ENCODE measurements at regions of chr11 and their contacts with region 1.

Region 1: DNA sequence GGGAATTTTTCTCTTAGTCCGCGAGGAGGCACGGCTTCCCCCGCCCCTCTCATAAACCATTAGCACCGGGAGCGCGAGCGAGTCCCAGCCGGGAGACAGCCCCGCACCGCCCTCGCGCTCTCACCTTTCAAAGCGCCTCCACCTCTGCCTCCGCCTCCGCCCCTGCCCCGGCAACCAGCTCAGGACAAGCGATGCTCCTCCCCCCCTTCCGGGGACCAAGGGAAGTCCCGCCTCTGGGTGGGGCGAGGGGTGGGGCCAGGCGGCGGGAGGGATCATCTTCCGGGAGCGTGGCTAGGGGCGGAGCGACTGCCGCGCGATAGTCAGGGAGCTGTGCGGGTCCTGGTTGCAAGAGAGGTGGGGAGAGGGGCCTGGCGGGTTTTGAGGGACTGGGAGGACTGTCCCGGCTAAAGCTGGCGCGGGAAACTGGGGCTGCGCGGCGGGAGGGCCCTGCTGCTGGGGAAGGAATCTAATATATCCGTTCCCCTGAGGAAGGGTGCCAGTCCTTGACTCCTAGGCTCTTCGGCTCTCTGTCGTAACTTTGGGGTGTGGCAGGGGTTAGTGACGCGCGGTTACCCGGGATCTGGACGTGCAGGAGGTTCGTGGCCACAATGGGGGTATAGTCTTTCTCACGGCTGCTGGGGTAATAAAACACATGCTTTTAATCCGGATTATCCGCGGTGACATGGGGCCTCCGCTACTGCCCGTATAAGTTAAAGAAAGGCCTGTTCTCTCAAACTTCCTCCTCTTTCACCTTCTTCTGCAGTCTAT is at the starts of genes CCDC82 and JRKL:
- DNase-seq: peak; percentile 94
- ATAC-seq: peak; percentile 94
- H3K4me3 ChIP-seq: peak within 1 kb of the TSS; percentile 77 to 88
- H3K27ac ChIP-seq: peak within 1 kb of the TSS; percentile 54
- H3K4me1 ChIP-seq: peaks cover 3 to 17% of the 10 kb centered on the region in 2 experiments; a peak in 2 of 4 replicates
- H3K27me3 ChIP-seq: no peaks in the 10 kb centered on the region
- CTCF ChIP-seq: no peak
- POLR2A ChIP-seq: peak; percentile 81
- RAD21 ChIP-seq: no peak
- total RNA-seq, gene CCDC82: 11.2 TPM
- total RNA-seq, gene JRKL: 6.7 TPM

Region 2: DNA sequence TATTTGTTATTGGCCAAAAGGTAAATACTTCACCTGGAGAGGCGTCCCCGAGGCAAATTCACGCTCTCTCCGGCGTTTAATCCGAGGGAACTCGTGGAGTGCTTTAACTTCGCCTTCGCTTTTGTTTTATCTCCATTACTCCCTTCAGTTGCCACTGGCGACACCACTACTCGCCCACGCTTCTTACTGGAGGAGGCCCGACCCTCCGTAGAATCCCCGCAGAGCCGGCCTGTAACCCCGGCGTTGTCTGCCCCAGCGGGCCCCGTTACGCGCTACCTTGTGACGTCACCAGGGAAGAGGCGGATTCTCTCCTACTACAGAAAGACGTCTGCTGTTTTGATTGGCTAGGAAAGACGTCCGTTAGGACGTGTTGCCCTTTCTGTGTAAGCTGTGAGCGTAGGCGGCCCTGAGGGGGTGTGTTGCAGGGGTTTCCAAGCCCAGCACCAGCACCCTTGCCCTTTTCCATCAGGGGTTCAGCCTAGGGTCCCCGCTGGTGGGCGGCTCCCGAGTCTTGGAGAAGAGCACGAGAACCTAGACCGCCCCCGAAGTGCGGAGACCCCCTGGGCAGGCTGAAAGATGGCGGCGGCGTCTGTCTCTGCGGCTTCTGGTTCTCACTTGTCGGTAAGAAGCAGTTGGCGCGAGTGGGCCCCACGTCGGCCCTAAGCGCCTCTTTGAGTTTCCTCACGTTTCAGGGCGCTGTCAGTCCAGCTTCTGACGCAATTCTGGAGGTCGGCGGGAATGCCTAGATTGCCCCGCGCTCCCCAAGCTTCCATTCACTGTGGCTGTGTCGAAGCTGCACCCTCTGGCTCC is 599.6 kb before region 1 on chr11 and contains the start of gene CEP57:
- CTCF ChIA-PET with region 1: no interaction called
- POLR2A ChIA-PET with region 1: no interaction called
- RAD21 ChIA-PET with region 1: no interaction called
- intact Hi-C with region 1: loop called (anchors 5 kb)
- DNase-seq: peak; percentile 97
- ATAC-seq: peak; percentile 78
- H3K4me3 ChIP-seq: peak within 1 kb of the TSS; percentile 76 to 87
- H3K27ac ChIP-seq: peak within 1 kb of the TSS; percentile 77
- H3K4me1 ChIP-seq: peaks cover 9 to 18% of the 10 kb centered on the region in 2 experiments; a peak in 3 of 4 replicates
- H3K27me3 ChIP-seq: no peaks in the 10 kb centered on the region
- CTCF ChIP-seq: no peak
- POLR2A ChIP-seq: peak; percentile 73
- RAD21 ChIP-seq: no peak
- total RNA-seq, gene CEP57: 43.3 TPM

Region 3: DNA sequence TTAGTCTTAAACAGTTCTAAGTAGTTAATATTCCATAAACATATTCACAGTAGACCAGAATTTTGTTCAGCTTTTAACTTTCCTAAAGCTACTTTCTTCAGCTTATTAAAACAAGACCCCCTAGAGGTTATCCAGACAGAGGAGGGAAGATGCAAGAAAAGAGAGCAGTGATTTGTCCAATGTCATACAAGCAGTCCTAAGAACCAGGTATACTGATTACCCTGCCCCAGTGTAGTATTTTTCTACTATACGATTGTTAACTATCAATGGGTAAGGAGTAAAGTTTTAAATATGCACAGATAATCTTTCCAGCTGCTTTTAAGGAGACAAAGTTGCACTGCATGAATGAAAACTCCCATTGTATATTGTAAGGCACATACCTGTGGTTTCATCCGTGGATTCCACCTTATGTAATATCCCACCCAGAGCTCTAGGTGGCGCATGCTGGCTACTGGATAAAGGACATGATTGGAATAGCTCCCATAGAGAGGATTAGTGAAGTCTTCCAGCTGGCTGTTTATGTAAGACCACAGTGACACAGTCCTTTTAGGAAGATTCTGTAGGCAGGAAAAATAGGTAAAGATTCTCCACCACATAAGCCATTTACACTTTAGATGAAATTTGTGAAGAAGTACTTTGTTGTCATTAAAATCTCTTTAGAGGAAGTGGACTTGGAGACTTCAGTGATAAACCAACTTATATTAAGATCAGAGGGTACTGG is 554.0 kb before region 1 on chr11:
- CTCF ChIA-PET with region 1: interaction called, 22 read pairs
- POLR2A ChIA-PET with region 1: interaction called, 4 read pairs
- RAD21 ChIA-PET with region 1: no interaction called
- intact Hi-C with region 1: loop called (anchors 1 kb)
- DNase-seq: peak; percentile 63
- ATAC-seq: peak; percentile 99
- H3K4me3 ChIP-seq: no peak overlapping the region
- H3K27ac ChIP-seq: no peak overlapping the region
- H3K4me1 ChIP-seq: no peaks in the 10 kb centered on the region
- H3K27me3 ChIP-seq: no peaks in the 10 kb centered on the region
- CTCF ChIP-seq: peak; percentile 66 to 96 (median 83); a peak in 5 of 6 replicates
- POLR2A ChIP-seq: no peak
- RAD21 ChIP-seq: peak; percentile 76

Region 4: DNA sequence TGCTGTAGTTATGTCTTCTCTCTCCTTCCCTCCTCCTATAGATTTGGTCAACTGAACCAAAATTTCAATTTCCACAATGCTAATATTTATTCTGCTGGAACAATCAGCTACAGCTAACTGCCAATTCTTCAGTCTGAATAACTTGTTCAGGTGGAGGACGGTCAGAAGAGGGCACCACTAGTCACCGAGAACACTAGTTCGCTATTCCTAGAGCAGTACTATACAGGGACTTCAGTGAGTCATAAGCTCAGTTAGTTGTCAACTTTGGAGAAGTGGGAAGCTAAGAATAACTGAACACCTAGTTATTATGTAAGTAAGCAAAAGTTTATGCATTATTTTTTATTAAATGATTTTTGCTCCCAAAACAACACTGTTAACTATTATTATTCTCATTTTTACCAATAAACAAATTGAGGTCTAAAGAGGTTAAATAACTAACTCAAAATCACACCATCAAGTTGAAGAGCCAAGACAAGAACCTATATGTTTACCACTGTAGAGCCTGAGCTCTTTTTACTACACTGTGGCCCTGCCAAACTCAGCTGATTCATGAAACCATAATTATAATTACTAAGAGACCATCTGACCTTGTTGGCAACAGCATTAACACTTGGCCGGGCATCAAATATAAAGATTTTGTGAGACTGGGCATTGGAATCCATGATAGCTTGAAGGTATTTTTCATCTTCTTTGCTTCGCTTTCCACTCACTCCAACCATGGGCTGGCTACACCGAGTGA is 540.6 kb before region 1 on chr11:
- CTCF ChIA-PET with region 1: interaction called, 20 read pairs
- POLR2A ChIA-PET with region 1: interaction called, 3 read pairs
- RAD21 ChIA-PET with region 1: interaction called in 1 of 2 experiments, 7 read pairs
- intact Hi-C with region 1: no loop called
- DNase-seq: peak; percentile 32
- ATAC-seq: peak; percentile 88
- H3K4me3 ChIP-seq: no peak overlapping the region
- H3K27ac ChIP-seq: no peak overlapping the region
- H3K4me1 ChIP-seq: no peaks in the 10 kb centered on the region
- H3K27me3 ChIP-seq: no peaks in the 10 kb centered on the region
- CTCF ChIP-seq: peak; percentile 39 to 60 (median 45); a peak in 5 of 6 replicates
- POLR2A ChIP-seq: no peak
- RAD21 ChIP-seq: peak; percentile 65

Region 5: GRCh38 chr11:95923728-95924413 is 466.0 kb before region 1 on chr11 and contains the start of gene MTMR2:
- CTCF ChIA-PET with region 1: no interaction called
- POLR2A ChIA-PET with region 1: interaction called, 4 read pairs
- RAD21 ChIA-PET with region 1: no interaction called
- intact Hi-C with region 1: loop called (anchors 5 kb)
- DNase-seq: peak; percentile 31
- ATAC-seq: peak; percentile 96
- H3K4me3 ChIP-seq: peak within 1 kb of the TSS; percentile 69 to 94
- H3K27ac ChIP-seq: peak within 1 kb of the TSS; percentile 79
- H3K4me1 ChIP-seq: peaks cover 6 to 14% of the 10 kb centered on the region in 2 experiments
- H3K27me3 ChIP-seq: no peaks in the 10 kb centered on the region
- CTCF ChIP-seq: no peak
- POLR2A ChIP-seq: peak; percentile 97
- RAD21 ChIP-seq: no peak
- total RNA-seq, gene MTMR2: 29.1 TPM

Region 6: DNA sequence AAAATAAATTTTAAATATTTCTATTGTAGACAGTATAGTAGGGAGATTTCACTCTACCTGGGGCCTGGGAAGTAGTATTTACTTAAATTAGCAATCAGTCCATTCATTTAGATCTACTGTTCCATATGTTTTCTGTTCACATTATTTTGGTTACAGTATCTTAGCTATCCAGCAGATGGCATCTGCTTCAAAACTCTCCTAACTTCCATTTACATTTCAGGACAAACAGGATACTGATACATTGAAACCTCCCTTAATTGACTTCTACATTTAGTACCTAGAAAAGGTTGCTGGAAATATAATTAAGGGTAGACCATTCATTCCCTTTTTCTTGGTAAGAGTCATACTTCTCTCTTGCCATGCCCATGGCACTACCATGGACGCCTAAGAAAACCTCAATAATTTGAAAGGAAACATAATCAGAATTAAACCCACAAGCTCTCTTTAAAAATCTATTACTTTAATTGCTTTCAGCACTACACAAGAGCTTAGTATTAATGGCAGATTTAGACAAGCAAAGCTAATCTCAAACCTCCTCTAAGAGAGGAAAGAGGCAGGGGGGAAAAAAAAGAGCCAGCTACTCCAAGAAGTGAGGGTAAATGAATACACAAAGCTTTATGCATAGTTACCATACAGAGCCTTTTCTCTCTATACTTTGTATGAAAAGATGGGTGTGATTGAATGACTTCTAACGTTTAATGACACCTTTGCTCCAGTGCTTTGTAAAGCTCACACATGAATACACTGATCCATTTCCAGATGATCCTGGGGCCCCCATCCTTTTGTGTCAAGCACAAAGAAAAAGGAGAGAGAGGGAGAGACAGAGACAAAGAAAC is 334.8 kb before region 1 on chr11:
- CTCF ChIA-PET with region 1: interaction called, 29 read pairs
- POLR2A ChIA-PET with region 1: no interaction called
- RAD21 ChIA-PET with region 1: interaction called, 3 to 6 read pairs
- intact Hi-C with region 1: loop called (anchors 1 kb)
- DNase-seq: peak; percentile 27
- ATAC-seq: peak; percentile 60; the same call in 1 of the 2 replicates
- H3K4me3 ChIP-seq: no peak overlapping the region
- H3K27ac ChIP-seq: no peak overlapping the region
- H3K4me1 ChIP-seq: peaks cover 0 to 14% of the 10 kb centered on the region in 2 experiments; a peak in 3 of 4 replicates
- H3K27me3 ChIP-seq: no peaks in the 10 kb centered on the region
- CTCF ChIP-seq: peak; percentile 53 to 83 (median 65)
- POLR2A ChIP-seq: no peak
- RAD21 ChIP-seq: peak; percentile 78

Region 7: GRCh38 chr11:96155627-96156378 is 234.1 kb before region 1 on chr11:
- CTCF ChIA-PET with region 1: no interaction called
- POLR2A ChIA-PET with region 1: no interaction called
- RAD21 ChIA-PET with region 1: no interaction called
- intact Hi-C with region 1: no loop called
- DNase-seq: peak; percentile 27
- ATAC-seq: peak; percentile 72
- H3K4me3 ChIP-seq: peak overlapping the region in 1 of 2 experiments; percentile 9; a peak in 2 of 4 replicates
- H3K27ac ChIP-seq: peak overlapping the region; percentile 7; the same call in 1 of the 2 replicates
- H3K4me1 ChIP-seq: peaks cover 12 to 24% of the 10 kb centered on the region in 2 experiments; a peak in 3 of 4 replicates
- H3K27me3 ChIP-seq: no peaks in the 10 kb centered on the region
- CTCF ChIP-seq: peak in 2 of 3 experiments; percentile 23 to 42; a peak in 3 of 6 replicates
- POLR2A ChIP-seq: no peak
- RAD21 ChIP-seq: 0 out of 2 replicates have a peak, but pooled peaks have one; percentile 22

Region 8: GRCh38 chr11:96242971-96243647 is 146.8 kb before region 1 on chr11:
- CTCF ChIA-PET with region 1: no interaction called
- POLR2A ChIA-PET with region 1: no interaction called
- RAD21 ChIA-PET with region 1: no interaction called
- intact Hi-C with region 1: loop called (anchors 5 kb)
- DNase-seq: peak; percentile 92
- ATAC-seq: peak; percentile 96
- H3K4me3 ChIP-seq: peak overlapping the region; percentile 42 to 47
- H3K27ac ChIP-seq: peak overlapping the region; percentile 87
- H3K4me1 ChIP-seq: peaks cover 26 to 45% of the 10 kb centered on the region in 2 experiments
- H3K27me3 ChIP-seq: no peaks in the 10 kb centered on the region
- CTCF ChIP-seq: no peak
- POLR2A ChIP-seq: no peak
- RAD21 ChIP-seq: 0 out of 2 replicates have a peak, but pooled peaks have one; percentile 11

Region 9: GRCh38 chr11:96447208-96448110 is 57.6 kb after region 1 on chr11:
- CTCF ChIA-PET with region 1: no interaction called
- POLR2A ChIA-PET with region 1: no interaction called
- RAD21 ChIA-PET with region 1: no interaction called
- intact Hi-C with region 1: no loop called
- DNase-seq: no peak
- ATAC-seq: no peak
- H3K4me3 ChIP-seq: no peak overlapping the region
- H3K27ac ChIP-seq: no peak overlapping the region
- H3K4me1 ChIP-seq: no peaks in the 10 kb centered on the region
- H3K27me3 ChIP-seq: peaks cover 32% of the 10 kb centered on the region
- CTCF ChIP-seq: no peak
- POLR2A ChIP-seq: no peak
- RAD21 ChIP-seq: no peak